ENCODE measurements at regions of chr7 and their contacts with region 1.

Region 1: DNA sequence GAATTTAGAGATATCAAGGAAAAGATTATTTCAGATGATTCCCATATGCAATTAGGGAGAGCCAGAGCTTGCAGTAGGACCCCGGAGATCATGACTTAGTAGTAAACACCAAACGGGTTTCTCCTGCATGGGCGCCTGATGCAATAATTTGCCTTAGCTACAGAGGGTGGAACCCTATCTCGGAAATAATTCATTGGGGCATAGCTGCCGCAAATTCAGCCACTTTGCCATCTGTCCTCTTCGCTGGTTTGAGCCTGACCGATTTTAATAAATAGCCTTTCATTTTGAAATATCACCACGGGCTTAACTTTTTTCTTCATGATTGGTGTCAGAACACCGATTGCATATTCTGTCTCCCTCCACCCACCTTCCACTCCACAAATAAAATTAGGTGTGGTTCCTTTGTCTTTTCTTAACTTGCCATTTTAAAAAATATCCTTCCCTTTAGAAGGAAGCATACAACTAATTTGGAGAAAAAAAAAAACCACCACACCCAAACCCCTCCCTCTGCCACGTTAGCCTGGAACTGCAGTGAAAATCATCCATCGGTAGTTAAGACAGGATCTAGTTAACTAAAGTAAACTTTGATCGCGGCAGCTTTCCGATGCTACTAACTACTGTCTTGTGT is 1.4 kb downstream of the GARS1 start:
- DNase-seq: peak; percentile 81
- H3K4me3 ChIP-seq: peak overlapping the region; percentile 94
- H3K27ac ChIP-seq: peak overlapping the region; percentile 95
- H3K4me1 ChIP-seq: peaks cover 21% of the 10 kb centered on the region
- CTCF ChIP-seq: no peak

Region 2: GRCh38 chr7:30612658-30613265 is 16.6 kb after region 1 on chr7:
- CTCF ChIA-PET with region 1: no interaction called
- POLR2A ChIA-PET with region 1: interaction called, 12 read pairs
- intact Hi-C with region 1: loop called (anchors 2 kb)
- DNase-seq: no peak
- H3K4me3 ChIP-seq: no peak overlapping the region
- H3K27ac ChIP-seq: no peak overlapping the region
- H3K4me1 ChIP-seq: no peaks in the 10 kb centered on the region
- CTCF ChIP-seq: no peak

Region 3: GRCh38 chr7:30630986-30631385 is 34.9 kb after region 1 on chr7:
- CTCF ChIA-PET with region 1: no interaction called
- POLR2A ChIA-PET with region 1: interaction called, 7 read pairs
- intact Hi-C with region 1: loop called (anchors 1 kb)
- DNase-seq: peak; percentile 51
- H3K4me3 ChIP-seq: no peak overlapping the region
- H3K27ac ChIP-seq: peak overlapping the region; percentile 60
- H3K4me1 ChIP-seq: peaks cover 17% of the 10 kb centered on the region
- CTCF ChIP-seq: no peak

Region 4: DNA sequence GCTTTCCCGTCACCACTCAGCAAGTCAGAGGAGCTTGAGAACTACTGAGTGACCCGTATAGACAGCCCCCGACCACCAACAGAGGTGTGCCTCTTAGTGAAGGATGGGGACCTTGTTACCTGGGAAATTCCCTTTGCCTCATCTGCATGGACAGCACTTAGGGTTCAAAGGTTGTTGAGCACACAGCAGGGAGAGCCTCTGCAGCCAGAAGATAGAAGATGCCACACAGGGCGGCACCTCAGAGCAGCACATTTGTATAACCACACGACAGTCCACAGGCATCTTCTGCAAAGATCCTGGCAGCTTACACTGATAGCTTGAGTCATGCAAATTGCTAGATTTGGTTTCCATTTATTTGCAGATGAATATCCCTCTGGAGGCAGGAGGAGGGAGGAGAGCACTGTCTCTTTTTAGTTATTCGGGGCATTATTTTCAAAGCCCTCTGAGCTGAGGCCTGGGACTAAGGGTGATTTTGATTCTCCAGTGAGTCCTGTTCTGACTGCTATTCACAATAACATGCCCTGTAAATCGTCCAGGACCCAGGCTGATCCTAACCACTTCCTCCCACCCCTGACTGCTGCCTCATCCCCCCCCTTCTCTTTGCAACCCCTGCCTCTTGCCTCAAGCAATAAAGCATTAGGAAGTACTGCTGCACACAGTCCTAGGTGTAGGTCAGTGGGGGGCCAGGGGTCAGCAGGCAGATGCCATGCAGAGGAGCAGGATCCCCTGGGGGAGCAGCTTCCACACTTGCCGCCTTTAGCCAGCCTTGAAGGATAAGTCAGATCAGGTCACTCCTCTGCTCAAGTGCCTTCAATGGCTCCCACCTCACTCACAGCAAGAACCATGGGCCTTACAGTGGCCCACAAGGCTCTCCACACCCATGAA is 131.2 kb after region 1 on chr7:
- CTCF ChIA-PET with region 1: no interaction called
- POLR2A ChIA-PET with region 1: no interaction called
- intact Hi-C with region 1: loop called (anchors 2 kb)
- DNase-seq: peak; percentile 73
- H3K4me3 ChIP-seq: peak overlapping the region; percentile 63
- H3K27ac ChIP-seq: peak overlapping the region; percentile 58
- H3K4me1 ChIP-seq: peaks cover 27% of the 10 kb centered on the region
- CTCF ChIP-seq: no peak

Measured in OCI-LY7 (cell line).